ENCODE measurements at regions of chr11 and their contacts with region 1.

Region 1: GRCh38 chr11:118198370-118198769 is 21.9 kb upstream of the SCN2B start:
- DNase-seq: peak; percentile 83 to 86
- ATAC-seq: peak; percentile 44 to 69 (median 61)
- H3K4me3 ChIP-seq: peak overlapping the region in 2 of 10 donors; percentile 16 to 26
- H3K27ac ChIP-seq: peak overlapping the region in 6 of 10 donors; percentile 18 to 50 (median 26)
- H3K4me1 ChIP-seq: peaks cover 8 to 44% (median 26%) of the 10 kb centered on the region in 9 donors
- H3K27me3 ChIP-seq: no peaks in the 10 kb centered on the region
- CTCF ChIP-seq: peak; percentile 80 to 93 (median 90)

Region 2: DNA sequence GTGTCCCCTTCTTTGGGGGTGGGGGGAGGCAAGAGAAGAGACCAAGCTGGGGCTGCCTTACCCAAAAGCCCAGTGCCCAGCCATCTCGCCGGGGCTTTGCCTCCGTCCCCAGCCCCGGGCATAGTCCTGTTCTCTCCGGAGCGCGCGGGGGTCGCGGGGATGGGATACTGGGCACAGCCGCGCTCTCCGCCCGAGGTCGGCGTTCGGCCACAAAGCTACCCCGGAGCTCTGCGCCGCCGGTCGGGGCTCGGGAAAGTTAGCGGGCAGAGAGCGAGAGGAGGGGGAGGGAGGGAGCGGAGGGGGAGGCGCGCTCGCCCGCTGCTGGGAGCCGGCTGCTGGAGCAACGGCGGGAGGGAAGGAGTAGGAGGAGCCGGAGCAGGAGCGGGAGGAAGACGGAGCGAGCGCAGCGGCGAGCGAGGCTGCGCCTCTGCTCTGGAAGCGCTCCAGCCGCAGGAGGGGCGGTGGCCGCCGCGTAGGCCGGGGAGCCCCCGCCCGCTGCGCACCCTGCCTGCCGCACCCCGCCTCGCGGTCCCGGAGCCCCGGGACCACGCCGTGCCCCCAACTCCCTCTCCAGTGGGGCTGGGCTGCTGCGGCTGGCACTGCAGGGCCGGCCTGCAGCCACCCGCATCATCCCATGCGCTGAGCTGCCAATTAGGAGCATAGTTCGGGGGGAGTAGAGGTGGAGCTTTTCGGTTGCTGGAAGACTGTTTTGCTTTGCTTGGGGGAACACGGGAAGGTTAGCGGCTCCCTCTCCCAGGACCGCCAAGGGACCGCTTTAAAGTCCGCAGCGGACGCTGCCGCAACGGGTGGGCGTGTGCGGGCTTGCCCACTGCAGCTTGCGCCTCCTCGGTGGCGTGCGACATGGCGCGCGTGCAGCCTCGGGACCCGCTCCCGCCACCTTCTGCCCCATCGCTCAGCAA is 45.6 kb before region 1 on chr11 and contains the start of gene SCN4B:
- intact Hi-C with region 1: no loop called
- DNase-seq: peak; percentile 73 to 76
- ATAC-seq: peak; percentile 74 to 92 (median 82)
- H3K4me3 ChIP-seq: peak within 1 kb of the TSS; percentile 37 to 76 (median 62)
- H3K27ac ChIP-seq: peak within 1 kb of the TSS in 7 of 10 donors; percentile 62 to 78 (median 77)
- H3K4me1 ChIP-seq: peaks cover 0 to 51% (median 17%) of the 10 kb centered on the region in 9 donors
- H3K27me3 ChIP-seq: peaks cover 0 to 74% (median 38%) of the 10 kb centered on the region in 7 donors
- CTCF ChIP-seq: peak in 1 of 9 donors; percentile 6
- total RNA-seq, gene SCN4B: 5.7 to 17.5 (median 10.3) TPM

Region 3: GRCh38 chr11:118180300-118180703 is 18.1 kb before region 1 on chr11:
- intact Hi-C with region 1: loop called in 1 of 10 experiments (anchors 2 kb)
- DNase-seq: peak; percentile 83 to 86
- ATAC-seq: peak; percentile 90 to 98 (median 94)
- H3K4me3 ChIP-seq: peak overlapping the region in 2 of 10 donors; percentile 13 to 25
- H3K27ac ChIP-seq: peak overlapping the region; percentile 26 to 86 (median 61)
- H3K4me1 ChIP-seq: peaks cover 0 to 36% (median 13%) of the 10 kb centered on the region in 9 donors
- H3K27me3 ChIP-seq: peaks cover 0 to 8% (median 0%) of the 10 kb centered on the region in 7 donors
- CTCF ChIP-seq: peak in 2 of 9 donors; percentile 32 to 36

Region 4: GRCh38 chr11:118227865-118228785 is 29.8 kb after region 1 on chr11:
- intact Hi-C with region 1: no loop called
- DNase-seq: no peak
- ATAC-seq: peak in 5 of 8 donors; percentile 11 to 60 (median 39)
- H3K4me3 ChIP-seq: no peak overlapping the region
- H3K27ac ChIP-seq: peak overlapping the region in 4 of 10 donors; percentile 32 to 85 (median 38)
- H3K4me1 ChIP-seq: peaks cover 0 to 59% (median 0%) of the 10 kb centered on the region in 9 donors
- H3K27me3 ChIP-seq: no peaks in the 10 kb centered on the region
- CTCF ChIP-seq: no peak

Region 5: GRCh38 chr11:118258410-118258809 is 60.0 kb after region 1 on chr11:
- intact Hi-C with region 1: loop called in 2 of 10 experiments (anchors 5 kb)
- DNase-seq: no peak
- ATAC-seq: no peak
- H3K4me3 ChIP-seq: no peak overlapping the region
- H3K27ac ChIP-seq: no peak overlapping the region
- H3K4me1 ChIP-seq: peaks cover 0 to 12% (median 0%) of the 10 kb centered on the region in 9 donors
- H3K27me3 ChIP-seq: peaks cover 0 to 12% (median 6%) of the 10 kb centered on the region in 7 donors
- CTCF ChIP-seq: peak in 1 of 9 donors; percentile 13

Region 6: GRCh38 chr11:118353084-118353710 is 154.8 kb after region 1 on chr11:
- intact Hi-C with region 1: loop called (anchors 1 to 5 kb)
- DNase-seq: no peak
- ATAC-seq: no peak
- H3K4me3 ChIP-seq: no peak overlapping the region
- H3K27ac ChIP-seq: no peak overlapping the region
- H3K4me1 ChIP-seq: peaks cover 0 to 3% (median 0%) of the 10 kb centered on the region in 9 donors
- H3K27me3 ChIP-seq: peaks cover 0 to 21% (median 4%) of the 10 kb centered on the region in 7 donors
- CTCF ChIP-seq: peak in 8 of 9 donors; percentile 35 to 70 (median 62)

Region 7: DNA sequence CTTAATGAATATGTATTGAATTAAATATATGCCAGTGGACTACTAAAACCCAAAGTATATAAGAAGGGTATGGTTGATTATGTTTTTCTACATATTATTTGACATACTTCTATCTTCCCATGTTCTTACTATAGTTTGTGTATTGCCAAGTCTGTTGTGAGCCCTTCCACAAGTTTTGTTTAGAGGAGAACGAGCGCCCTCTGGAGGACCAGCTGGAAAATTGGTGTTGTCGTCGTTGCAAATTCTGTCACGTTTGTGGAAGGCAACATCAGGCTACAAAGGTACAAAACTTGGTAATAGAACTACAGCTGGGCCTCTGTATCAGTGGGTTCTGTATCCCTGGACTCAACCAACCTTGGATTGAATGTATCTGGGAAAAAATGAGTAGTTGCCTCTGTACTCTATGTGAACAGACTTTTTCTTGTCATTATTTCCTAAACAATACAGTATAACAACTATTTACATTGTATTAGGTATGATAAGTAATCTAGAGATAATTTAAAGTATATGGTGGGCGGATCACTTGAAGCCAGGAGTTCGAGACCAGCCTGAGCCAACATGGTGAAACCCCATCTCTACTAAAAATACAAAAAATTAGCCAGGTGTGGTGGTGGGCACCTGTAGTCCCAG is 290.2 kb after region 1 on chr11:
- intact Hi-C with region 1: loop called in 3 of 10 experiments (anchors 2 to 10 kb)
- DNase-seq: peak; percentile 50 to 61
- ATAC-seq: peak in 7 of 8 donors; percentile 46 to 72 (median 62)
- H3K4me3 ChIP-seq: no peak overlapping the region
- H3K27ac ChIP-seq: no peak overlapping the region
- H3K4me1 ChIP-seq: peaks cover 0 to 9% (median 0%) of the 10 kb centered on the region in 9 donors
- H3K27me3 ChIP-seq: no peaks in the 10 kb centered on the region
- CTCF ChIP-seq: peak; percentile 58 to 90 (median 82)

Measured in heart right ventricle (tissue), 16 donors.